Heart right ventricle (tissue), 16 donors: ENCODE measurements at regions of chr9 and their contacts with region 1.

Region 1: DNA sequence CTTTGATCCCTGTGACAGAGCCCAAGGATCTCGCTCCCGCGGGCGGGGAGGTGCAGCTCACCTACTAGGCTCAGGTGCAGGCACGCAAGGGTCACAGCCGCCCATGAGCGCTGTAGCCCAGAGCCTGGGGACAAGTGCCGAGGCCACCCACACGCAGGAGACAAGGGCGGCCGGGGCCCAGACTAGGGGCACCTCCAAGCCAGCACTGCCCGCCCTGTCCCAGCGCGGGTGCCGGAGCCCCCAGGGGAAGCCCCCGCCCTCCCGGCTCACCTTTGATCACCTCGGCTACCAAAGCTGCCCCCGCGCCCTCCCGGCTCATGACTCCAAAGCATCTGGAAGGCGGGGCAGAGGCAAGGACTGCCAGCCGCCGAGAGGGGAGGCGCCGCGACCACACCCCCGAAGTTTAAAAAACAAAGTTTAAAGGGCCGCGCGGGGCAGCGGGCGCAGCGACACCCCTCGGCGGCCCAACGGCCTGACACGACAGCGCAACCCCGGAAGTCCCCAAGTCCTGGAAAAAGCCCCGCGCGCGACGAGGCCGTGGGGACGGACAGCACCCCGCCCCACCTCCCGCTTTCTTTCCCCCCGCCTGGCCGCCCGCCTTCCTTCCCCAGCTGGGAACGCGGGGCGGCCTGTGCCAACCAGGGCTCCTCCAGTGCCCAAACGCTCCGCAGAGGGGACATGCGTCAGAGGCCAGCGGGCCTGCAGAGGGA is 53.0 kb downstream of the CDC14B start:
- DNase-seq: peak; percentile 81 to 83
- ATAC-seq: peak; percentile 92 to 95 (median 94)
- H3K4me3 ChIP-seq: peak overlapping the region; percentile 53 to 91 (median 81)
- H3K27ac ChIP-seq: peak overlapping the region; percentile 81 to 95 (median 86)
- H3K4me1 ChIP-seq: peaks cover 0 to 34% (median 20%) of the 10 kb centered on the region in 9 donors
- H3K27me3 ChIP-seq: peaks cover 0 to 4% (median 0%) of the 10 kb centered on the region in 7 donors
- CTCF ChIP-seq: peak; percentile 52 to 87 (median 71)

Region 2: DNA sequence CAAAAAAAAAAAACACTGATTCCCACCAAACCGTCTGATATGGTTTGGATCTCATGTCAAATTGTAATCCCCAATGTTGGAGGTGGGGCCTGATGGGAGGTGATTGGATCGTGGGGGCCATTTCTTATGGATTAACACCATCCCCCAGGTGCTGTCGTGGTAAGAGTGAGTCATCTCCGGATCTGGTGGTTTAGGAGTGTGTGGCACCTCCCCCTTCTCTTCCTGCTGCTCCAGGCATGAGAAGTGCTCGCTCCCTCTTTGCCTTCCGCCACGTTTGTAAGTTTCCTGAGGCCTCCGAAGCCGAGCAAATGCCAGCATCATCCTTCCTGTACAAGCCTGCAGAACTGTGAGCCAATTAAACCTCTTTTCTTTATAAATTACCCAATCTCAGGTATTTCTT is 309.9 kb before region 1 on chr9:
- intact Hi-C with region 1: no loop called
- DNase-seq: no peak
- ATAC-seq: no peak
- H3K4me3 ChIP-seq: no peak overlapping the region
- H3K27ac ChIP-seq: no peak overlapping the region
- H3K4me1 ChIP-seq: no peaks in the 10 kb centered on the region
- H3K27me3 ChIP-seq: peaks cover 0 to 8% (median 0%) of the 10 kb centered on the region in 7 donors
- CTCF ChIP-seq: no peak

Region 3: GRCh38 chr9:96619491-96620154 is 53.0 kb after region 1 on chr9 and contains the start of gene CDC14B:
- intact Hi-C with region 1: loop called in 7 of 10 experiments (anchors 2 to 10 kb)
- DNase-seq: peak; percentile 87 to 89
- ATAC-seq: peak; percentile 71 to 85 (median 79)
- H3K4me3 ChIP-seq: peak within 1 kb of the TSS; percentile 46 to 91 (median 68)
- H3K27ac ChIP-seq: peak within 1 kb of the TSS; percentile 65 to 92 (median 84)
- H3K4me1 ChIP-seq: peaks cover 0 to 15% (median 4%) of the 10 kb centered on the region in 9 donors
- H3K27me3 ChIP-seq: peaks cover 0 to 54% (median 0%) of the 10 kb centered on the region in 7 donors
- CTCF ChIP-seq: peak in 1 of 9 donors; percentile 32
- total RNA-seq, gene CDC14B: 17.0 to 30.8 (median 27.0) TPM